Transverse colon (tissue), 4 donors: ENCODE measurements at regions of chr2 and their contacts with region 1.

Region 1: GRCh38 chr2:169933124-169933711 is 106.0 kb downstream of the UBR3 start:
- DNase-seq: no peak
- H3K4me3 ChIP-seq: no peak overlapping the region
- H3K27ac ChIP-seq: no peak overlapping the region
- H3K4me1 ChIP-seq: no peaks in the 10 kb centered on the region
- H3K27me3 ChIP-seq: no peaks in the 10 kb centered on the region
- CTCF ChIP-seq: peak; percentile 33 to 70 (median 63)
- EP300 ChIP-seq: no peak
- POLR2A ChIP-seq: no peak

Region 2: DNA sequence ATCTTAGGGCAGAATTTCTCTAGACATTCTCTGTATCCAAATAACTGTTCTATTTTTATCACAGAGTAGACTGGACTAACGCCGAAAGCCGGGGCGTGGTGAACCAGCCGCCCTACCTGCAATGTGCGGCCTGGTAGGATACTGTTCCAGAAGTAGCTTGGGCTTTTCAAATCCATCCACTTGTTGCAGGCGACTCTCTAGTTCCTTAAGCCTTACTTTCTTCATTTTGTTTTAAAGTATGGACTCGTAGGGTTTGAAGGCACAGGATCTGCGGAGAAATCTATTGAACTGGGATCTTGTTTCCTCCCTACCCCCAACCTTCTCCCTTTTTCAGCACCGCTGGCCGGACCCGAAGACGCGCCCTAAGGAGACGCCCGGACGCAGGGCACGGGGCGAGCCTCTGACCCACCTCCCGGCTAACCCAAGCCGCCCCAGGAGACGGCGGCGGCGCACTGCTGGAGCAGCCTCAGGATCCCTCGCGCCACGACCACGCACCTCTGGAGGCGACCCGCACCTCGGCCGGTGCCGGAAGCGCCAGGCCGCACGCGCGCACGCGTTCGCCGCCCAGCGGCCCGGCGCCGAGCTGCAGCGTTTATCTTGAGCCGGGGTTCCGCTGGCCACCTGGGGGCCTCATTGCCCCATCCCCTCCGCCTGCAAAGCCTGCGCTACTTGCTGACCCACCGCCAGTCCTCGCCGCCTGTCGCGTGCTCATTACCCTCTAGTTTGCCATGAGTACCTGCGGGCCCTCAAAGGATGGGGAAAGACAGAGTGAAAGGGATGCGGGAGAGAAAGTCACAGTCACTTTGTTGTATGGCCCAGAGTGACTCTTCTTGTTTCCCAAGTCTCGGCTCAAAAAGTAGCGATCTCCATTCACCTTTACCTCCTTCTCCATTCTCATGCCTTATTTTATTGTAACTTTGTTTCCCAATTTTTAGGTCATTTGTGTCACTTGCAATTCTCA is 108.6 kb before region 1 on chr2 and contains the start of gene METTL5:
- in situ Hi-C with region 1: no loop called
- intact Hi-C with region 1: loop called (anchors 5 kb)
- DNase-seq: peak; percentile 84
- H3K4me3 ChIP-seq: peak within 1 kb of the TSS; percentile 60 to 79 (median 72)
- H3K27ac ChIP-seq: peak within 1 kb of the TSS; percentile 81 to 88 (median 84)
- H3K4me1 ChIP-seq: peaks cover 17 to 41% (median 31%) of the 10 kb centered on the region in 4 donors
- H3K27me3 ChIP-seq: no peaks in the 10 kb centered on the region
- CTCF ChIP-seq: peak; percentile 53 to 97 (median 93)
- EP300 ChIP-seq: no peak
- POLR2A ChIP-seq: peak; percentile 50
- total RNA-seq, gene METTL5: 10.5 to 35.7 (median 34.1) TPM in 3 of 4 donors, not detected in the other